ENCODE measurements at regions of chr6 and their contacts with region 1.

Region 1: GRCh38 chr6:53398247-53399026 is 49.7 kb upstream of the ELOVL5 start:
- DNase-seq: peak; percentile 46
- ATAC-seq: peak; percentile 56
- H3K4me3 ChIP-seq: peak overlapping the region; percentile 46
- H3K27ac ChIP-seq: peak overlapping the region; percentile 80
- H3K4me1 ChIP-seq: peaks cover 28% of the 10 kb centered on the region
- H3K27me3 ChIP-seq: no peaks in the 10 kb centered on the region
- CTCF ChIP-seq: no peak

Region 2: DNA sequence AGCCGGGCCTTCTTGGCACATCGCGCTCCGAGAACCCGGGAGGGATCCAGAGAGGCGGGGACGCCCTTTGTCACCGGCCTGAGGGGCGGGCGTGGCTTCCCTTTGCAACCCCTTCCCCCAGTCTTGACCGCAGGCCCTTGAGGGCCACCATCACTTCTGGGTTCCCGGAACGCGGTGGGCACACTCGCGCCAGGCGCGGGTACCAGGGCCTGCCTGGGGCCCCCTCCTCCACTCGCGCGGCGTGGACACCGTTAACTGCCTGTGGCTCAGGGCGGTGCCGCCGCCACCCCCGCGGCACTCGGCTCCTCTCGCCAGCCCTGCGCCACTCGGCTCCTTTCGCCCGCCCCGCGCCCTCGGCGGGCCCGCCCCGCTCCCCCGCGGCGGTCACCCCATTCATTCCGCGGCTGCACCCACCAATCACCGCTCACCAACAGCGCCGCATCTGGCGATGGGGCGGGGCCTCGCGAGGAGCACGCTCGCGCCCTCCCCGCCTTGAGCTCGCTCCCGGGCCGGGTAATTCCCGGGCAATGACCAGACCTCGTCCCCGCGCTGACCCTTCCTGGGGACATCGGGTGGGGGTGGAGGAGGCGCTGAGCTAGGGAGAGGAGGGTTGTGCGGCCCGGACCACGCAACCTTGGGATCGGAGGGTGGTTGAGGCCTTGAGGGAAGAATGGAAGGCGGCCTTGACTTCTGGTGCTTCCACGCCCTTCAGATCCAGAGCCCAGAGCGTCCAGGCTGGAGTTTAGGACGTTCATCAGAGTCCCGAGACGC is 39.2 kb before region 1 on chr6:
- CTCF ChIA-PET with region 1: no interaction called
- POLR2A ChIA-PET with region 1: no interaction called
- intact Hi-C with region 1: loop called (anchors 2 kb)
- DNase-seq: peak; percentile 96
- ATAC-seq: peak; percentile 94
- H3K4me3 ChIP-seq: peak overlapping the region; percentile 72
- H3K27ac ChIP-seq: peak overlapping the region; percentile 88
- H3K4me1 ChIP-seq: peaks cover 42% of the 10 kb centered on the region
- H3K27me3 ChIP-seq: no peaks in the 10 kb centered on the region
- CTCF ChIP-seq: no peak